ENCODE measurements at regions of chr1 and their contacts with region 1.

Region 1: GRCh38 chr1:167066333-167067122 is 23.6 kb downstream of the GPA33 start:
- DNase-seq: peak; percentile 65 to 98 (median 84)

Region 2: GRCh38 chr1:167128261-167129227 is 62.0 kb after region 1 on chr1:
- intact Hi-C with region 1: loop called (anchors 2 kb)
- DNase-seq: no peak

Region 3: GRCh38 chr1:167196166-167196565 is 129.6 kb after region 1 on chr1:
- intact Hi-C with region 1: no loop called
- DNase-seq: no peak

Region 4: DNA sequence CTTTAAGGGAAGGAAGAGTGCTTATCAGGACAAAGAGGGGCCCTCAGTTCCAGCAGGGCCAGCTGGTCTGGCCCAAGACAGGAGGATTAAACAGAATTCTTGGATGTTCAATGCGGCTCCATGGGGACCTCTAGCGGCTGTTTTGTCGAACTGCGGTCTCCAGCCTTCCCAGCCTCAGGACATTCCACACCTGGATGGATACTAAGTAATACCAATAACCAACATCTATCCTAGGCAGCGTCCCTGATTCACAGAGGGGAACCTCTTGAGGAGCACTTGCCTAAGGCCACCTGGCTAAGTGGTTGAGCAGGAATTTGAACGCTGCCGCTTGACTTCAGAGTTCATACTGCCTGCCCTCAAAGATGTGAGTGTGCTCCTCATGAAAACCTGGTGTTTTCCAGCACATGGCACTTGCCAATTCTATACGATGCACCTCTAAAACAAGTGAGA is 467.3 kb after region 1 on chr1:
- intact Hi-C with region 1: loop called (anchors 5 kb)
- DNase-seq: peak in 9 of 10 donors; percentile 59 to 95 (median 74)